ENCODE measurements at regions of chr16 and their contacts with region 1.

Region 1: GRCh38 chr16:82639666-82640336 is 13.0 kb downstream of the CDH13 start:
- DNase-seq: no peak

Region 2: DNA sequence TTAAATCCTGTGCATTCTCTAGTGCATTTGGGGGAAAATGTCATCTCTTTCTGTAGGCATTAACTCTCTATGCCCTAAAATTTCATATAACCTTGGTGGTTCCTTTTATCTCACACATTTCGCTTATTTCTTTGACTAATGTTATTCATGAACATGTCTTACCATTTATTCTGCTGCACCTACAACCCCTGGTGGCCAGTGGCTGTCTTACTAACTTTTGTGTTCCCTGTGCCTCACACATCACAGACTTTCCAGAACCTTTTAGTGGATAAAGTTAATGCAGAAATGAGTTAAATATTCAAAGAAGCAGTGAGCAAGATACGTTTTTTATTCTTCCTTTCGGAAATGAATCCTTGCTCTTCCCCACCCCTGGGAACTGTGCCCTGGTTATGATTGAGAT is 98.9 kb after region 1 on chr16:
- intact Hi-C with region 1: loop called (anchors 5 kb)
- DNase-seq: no peak

Region 3: DNA sequence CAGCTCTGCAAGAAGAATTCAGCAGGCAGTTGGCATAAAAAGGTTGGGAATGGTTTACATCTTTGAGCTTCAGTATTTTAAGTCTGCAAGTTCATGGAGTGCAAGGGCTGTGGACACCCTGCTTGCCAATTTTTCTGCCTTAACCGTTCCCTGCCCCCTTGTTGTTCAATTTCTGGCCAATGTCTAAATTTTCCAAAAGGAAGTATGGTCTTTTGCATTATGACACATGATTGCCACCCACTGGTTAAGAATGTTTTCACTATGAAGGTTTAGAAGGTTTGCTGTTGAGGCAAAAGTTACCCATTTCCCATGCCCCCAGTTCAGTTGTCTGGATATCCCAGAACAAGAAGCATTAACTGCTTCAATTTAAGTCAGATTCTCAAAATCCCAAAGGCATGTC is 428.9 kb after region 1 on chr16:
- intact Hi-C with region 1: loop called (anchors 10 kb)
- DNase-seq: no peak

Region 4: GRCh38 chr16:83356266-83356665 is 716.5 kb after region 1 on chr16:
- intact Hi-C with region 1: loop called (anchors 10 kb)
- DNase-seq: no peak